Endothelial cell of umbilical vein (primary cell): ENCODE measurements at regions of chr9 and their contacts with region 1.

Region 1: DNA sequence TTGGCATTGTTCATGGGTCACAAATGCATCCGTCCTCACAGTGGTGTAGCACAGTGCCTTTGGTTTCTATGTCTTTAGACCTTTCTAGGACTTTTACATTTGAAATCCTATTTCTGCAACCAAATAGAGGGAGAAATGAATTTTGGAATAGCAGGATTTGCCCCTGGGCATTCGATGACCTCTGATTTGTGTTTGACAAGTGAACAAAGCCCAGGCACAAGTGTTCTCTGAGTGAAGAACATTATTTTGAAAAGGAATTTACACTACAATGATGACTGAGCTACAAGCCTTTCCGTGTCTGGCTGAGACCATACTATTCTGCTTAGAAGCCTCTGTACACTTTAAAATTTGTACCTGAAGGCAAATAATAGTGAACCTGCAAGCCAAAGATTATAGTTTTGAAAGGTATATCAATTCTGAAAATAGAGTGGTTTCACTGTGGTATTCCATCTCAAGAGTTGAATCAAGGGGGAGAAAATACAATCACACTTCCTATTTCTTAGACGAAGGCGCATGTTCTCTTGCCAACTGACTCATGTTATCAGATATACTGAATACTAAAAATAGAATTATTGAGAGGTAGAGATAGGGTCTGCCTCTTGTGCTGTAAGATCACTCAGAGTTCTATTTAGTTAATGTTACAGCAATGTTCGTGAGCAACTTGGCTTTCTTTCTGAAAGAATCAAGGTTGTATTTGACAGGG is 297.6 kb downstream of the KDM4C start:
- DNase-seq: peak; percentile 34
- H3K4me3 ChIP-seq: no peak overlapping the region
- H3K27ac ChIP-seq: no peak overlapping the region
- H3K4me1 ChIP-seq: no peaks in the 10 kb centered on the region
- H3K27me3 ChIP-seq: no peaks in the 10 kb centered on the region
- CTCF ChIP-seq: no peak
- POLR2A ChIP-seq: no peak

Region 2: DNA sequence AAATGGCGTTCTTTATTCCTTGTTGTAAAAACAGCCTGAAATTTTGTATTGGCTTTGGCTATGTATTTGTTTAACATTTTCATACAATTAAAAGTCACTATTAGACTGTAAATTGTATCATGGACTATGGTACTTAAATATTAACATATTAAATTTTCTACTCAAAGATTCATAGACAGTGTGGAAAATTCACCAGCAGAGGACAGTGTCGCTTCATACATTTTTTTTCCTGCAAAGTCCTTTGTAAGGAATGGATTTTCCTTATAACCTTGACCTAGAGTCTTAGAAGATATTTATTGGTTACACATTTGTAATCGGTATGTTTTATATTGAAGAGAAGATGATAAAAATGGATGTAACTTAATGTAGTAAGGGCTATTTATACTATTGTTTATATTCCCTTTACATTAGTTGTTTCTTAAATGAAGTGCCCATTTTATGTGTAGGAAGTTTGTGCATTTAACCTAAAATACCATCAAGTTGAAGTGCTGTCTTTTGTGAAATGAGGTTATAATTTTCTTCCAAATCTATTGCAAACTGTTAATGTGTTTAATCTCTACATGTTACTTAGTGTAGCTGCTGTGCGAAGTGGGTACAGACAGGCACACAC is 147.5 kb before region 1 on chr9:
- CTCF ChIA-PET with region 1: interaction called, 19 read pairs
- POLR2A ChIA-PET with region 1: no interaction called
- dilution Hi-C with region 1: no loop called
- intact Hi-C with region 1: loop called (anchors 1 kb)
- DNase-seq: peak; percentile 64
- H3K4me3 ChIP-seq: no peak overlapping the region
- H3K27ac ChIP-seq: no peak overlapping the region
- H3K4me1 ChIP-seq: peaks cover 2% of the 10 kb centered on the region
- H3K27me3 ChIP-seq: no peaks in the 10 kb centered on the region
- CTCF ChIP-seq: peak; percentile 41 to 52
- POLR2A ChIP-seq: no peak

Region 3: GRCh38 chr9:7186175-7186574 is 130.8 kb after region 1 on chr9:
- CTCF ChIA-PET with region 1: interaction called, 83 read pairs
- POLR2A ChIA-PET with region 1: no interaction called
- dilution Hi-C with region 1: no loop called
- intact Hi-C with region 1: loop called (anchors 1 kb)
- DNase-seq: peak; percentile 22
- H3K4me3 ChIP-seq: no peak overlapping the region
- H3K27ac ChIP-seq: no peak overlapping the region
- H3K4me1 ChIP-seq: peaks cover 8% of the 10 kb centered on the region
- H3K27me3 ChIP-seq: peaks cover 0 to 3% of the 10 kb centered on the region in 2 experiments
- CTCF ChIP-seq: peak; percentile 54 to 66
- POLR2A ChIP-seq: no peak

Region 4: GRCh38 chr9:7265181-7265580 is 209.8 kb after region 1 on chr9:
- CTCF ChIA-PET with region 1: no interaction called
- POLR2A ChIA-PET with region 1: no interaction called
- dilution Hi-C with region 1: no loop called
- intact Hi-C with region 1: no loop called
- DNase-seq: no peak
- H3K4me3 ChIP-seq: no peak overlapping the region
- H3K27ac ChIP-seq: no peak overlapping the region
- H3K4me1 ChIP-seq: no peaks in the 10 kb centered on the region
- H3K27me3 ChIP-seq: no peaks in the 10 kb centered on the region
- CTCF ChIP-seq: no peak
- POLR2A ChIP-seq: no peak

Region 5: DNA sequence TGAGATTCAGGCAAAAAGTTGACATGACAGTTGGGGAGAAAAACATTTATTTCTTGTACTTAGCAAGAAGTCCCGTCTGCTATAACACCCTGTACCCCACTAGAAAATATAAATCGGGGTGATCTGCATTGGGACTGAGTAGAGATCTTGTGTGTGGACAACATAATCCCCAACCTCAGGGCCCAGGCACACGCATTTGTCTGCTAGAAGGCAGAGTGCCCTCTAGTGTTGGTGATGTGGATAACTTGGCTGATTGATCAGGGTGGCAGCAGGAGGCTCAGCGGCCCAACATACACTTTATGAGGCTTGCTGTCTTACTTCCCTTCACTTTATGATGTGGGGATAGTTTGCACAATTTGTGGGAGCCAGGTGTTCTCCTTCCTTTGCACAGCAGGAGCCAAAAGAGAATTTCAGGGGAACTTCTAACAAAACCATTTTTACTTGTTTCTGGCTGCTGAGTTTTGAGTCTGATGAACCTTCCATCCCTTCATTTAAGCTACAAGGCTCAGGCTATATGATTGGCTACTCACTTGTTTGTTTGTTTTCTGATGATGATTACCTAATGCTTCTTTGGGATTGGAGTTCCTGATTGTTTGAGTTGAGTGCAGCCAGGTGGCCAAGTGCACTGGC is 481.1 kb after region 1 on chr9:
- CTCF ChIA-PET with region 1: interaction called, 30 read pairs
- POLR2A ChIA-PET with region 1: no interaction called
- dilution Hi-C with region 1: no loop called
- intact Hi-C with region 1: loop called (anchors 1 kb)
- DNase-seq: peak; percentile 42
- H3K4me3 ChIP-seq: no peak overlapping the region
- H3K27ac ChIP-seq: no peak overlapping the region
- H3K4me1 ChIP-seq: no peaks in the 10 kb centered on the region
- H3K27me3 ChIP-seq: no peaks in the 10 kb centered on the region
- CTCF ChIP-seq: peak; percentile 50 to 69
- POLR2A ChIP-seq: no peak

Region 6: DNA sequence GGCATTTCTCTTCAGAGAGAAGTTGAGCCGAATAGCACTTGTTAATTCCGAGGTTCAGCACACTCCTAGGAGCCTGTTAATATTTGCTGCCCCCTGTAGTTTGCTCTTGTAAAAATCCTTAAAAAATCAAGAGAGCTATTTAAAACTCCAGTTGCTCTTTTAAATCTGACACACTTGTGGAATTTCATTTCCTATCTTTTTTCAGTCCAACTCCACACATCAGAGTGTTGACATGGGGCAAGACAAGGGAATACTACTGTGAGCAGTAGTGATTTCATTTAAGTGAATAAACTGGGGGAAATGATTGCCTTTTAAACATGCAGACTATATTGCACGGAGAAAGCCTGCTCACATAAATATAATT is 1840.5 kb after region 1 on chr9:
- CTCF ChIA-PET with region 1: interaction called, 11 read pairs
- POLR2A ChIA-PET with region 1: no interaction called
- dilution Hi-C with region 1: no loop called
- intact Hi-C with region 1: no loop called
- DNase-seq: peak; percentile 47
- H3K4me3 ChIP-seq: no peak overlapping the region
- H3K27ac ChIP-seq: no peak overlapping the region
- H3K4me1 ChIP-seq: no peaks in the 10 kb centered on the region
- H3K27me3 ChIP-seq: no peaks in the 10 kb centered on the region
- CTCF ChIP-seq: peak; percentile 14 to 26
- POLR2A ChIP-seq: no peak